Heart left ventricle (tissue), 16 donors: ENCODE measurements at regions of chr11 and their contacts with region 1.

Region 1: GRCh38 chr11:9613118-9613829 is 39.8 kb downstream of the WEE1 start:
- DNase-seq: peak; percentile 94 to 96 (median 95)
- ATAC-seq: peak; percentile 92 to 94 (median 94)
- H3K4me3 ChIP-seq: peak overlapping the region; percentile 16 to 69 (median 54)
- H3K27ac ChIP-seq: peak overlapping the region; percentile 95 to 100 (median 97)
- H3K4me1 ChIP-seq: peaks cover 0 to 28% (median 17%) of the 10 kb centered on the region in 12 donors
- H3K27me3 ChIP-seq: no peaks in the 10 kb centered on the region
- CTCF ChIP-seq: peak in 11 of 12 donors; percentile 91 to 99 (median 97)
- POLR2A ChIP-seq: peak in 1 of 2 donors; percentile 40

Region 2: DNA sequence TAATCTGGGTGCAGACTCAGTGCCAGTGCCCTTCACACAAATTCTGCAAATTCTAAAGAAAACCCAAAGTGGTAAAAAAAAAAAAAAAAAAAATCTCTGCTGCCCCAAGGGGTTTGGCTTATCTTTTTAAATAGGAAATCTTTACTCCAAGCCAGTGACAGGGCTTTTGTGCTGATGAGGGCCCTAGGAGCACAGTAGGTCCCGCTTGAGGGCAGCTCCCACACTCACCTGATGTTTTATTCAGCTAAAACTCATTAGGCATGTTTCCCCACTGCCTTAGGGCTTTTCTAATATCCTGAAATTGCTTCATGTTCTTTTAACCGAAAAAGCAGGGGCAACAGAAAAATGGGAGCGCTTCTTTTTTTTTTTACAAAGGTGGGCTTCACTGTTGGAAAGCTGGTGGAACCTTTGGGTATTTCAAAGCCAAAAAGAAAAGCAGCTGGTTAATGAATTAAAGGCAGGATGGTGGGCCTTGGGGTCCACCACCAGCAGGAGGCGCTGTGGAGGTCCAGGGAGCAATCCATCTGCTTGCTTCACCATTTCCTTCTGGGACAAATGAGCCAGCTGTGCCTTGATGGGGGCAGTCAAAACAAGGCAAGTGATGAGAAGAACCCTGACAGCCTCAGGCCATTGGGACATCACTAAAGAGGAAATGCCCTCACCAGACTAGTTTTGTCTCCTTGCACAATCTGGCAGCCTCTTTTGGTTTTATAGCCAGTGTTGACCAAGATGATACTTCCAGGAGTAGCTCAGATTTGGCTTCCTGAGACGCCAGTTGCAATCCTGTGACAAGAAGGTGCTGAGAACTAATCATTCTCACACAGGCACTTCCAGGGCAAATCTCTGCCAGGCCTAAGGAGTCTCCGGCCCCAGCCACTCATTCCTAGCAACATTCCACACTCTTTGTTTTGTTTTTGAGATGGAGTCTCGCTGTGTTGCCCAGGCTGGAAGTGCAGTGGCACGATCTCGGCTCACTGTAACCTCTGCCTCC is 78.2 kb before region 1 on chr11:
- intact Hi-C with region 1: loop called in 7 of 10 experiments (anchors 1 to 10 kb)
- DNase-seq: peak; percentile 62 to 88 (median 75)
- ATAC-seq: peak; percentile 49 to 87 (median 80)
- H3K4me3 ChIP-seq: no peak overlapping the region
- H3K27ac ChIP-seq: no peak overlapping the region
- H3K4me1 ChIP-seq: peaks cover 0 to 12% (median 2%) of the 10 kb centered on the region in 12 donors
- H3K27me3 ChIP-seq: no peaks in the 10 kb centered on the region
- CTCF ChIP-seq: peak; percentile 59 to 88 (median 74)
- POLR2A ChIP-seq: no peak

Region 3: DNA sequence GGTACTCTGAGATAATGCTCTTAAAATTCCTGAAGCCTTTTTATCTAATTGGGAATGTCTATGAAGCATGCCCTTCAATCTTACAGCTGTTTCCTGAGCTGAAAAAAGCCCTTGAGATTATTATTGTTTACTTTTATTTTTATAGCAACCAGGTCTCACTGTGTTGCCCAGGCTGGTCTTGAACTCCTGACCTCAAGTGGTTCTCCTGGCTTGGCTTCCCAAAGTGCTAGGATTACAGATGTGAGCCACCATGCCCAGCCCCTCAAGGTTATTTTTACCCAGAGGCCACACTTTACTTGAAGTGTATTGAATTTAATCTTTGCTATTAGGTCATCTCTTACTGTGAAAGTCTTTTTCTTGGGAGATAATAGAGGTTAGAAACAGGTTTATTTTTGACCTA is 43.6 kb after region 1 on chr11:
- intact Hi-C with region 1: loop called in 5 of 10 experiments (anchors 2 to 10 kb)
- DNase-seq: no peak
- ATAC-seq: no peak
- H3K4me3 ChIP-seq: no peak overlapping the region
- H3K27ac ChIP-seq: no peak overlapping the region
- H3K4me1 ChIP-seq: peaks cover 0 to 25% (median 0%) of the 10 kb centered on the region in 12 donors
- H3K27me3 ChIP-seq: no peaks in the 10 kb centered on the region
- CTCF ChIP-seq: no peak
- POLR2A ChIP-seq: no peak

Region 4: DNA sequence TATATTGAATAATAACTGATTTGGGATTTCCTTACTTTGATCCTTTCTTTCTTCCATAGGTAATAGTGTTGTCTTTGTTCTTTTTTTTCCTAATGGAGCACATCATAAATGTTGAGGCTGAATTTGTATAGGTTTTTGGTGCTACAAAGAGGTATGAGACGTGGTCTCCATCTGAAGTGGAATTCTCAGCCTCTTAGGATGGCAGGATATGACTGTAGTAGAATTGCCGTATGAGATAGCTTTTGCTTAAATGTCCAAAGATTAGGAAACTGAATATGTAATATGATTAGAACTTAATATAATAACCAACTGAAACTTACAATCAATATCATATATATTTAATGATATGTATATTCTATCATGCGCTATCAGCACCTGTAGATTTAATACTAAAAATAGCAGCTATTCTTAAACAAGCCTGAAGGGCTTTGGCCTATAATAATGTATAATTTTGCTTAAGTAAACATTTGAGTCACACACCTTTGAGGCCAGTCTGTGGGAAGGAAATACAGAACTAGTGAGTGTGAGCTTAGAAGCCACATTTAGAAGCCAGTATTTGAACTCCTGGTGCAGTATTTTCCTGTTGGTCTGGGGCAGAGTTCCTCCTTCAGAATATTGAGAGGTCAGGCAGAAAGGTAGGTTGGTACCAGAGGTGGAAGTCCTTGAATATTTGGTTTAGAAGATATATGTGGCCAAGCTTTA is 113.2 kb after region 1 on chr11:
- intact Hi-C with region 1: loop called in 1 of 10 experiments (anchors 5 kb)
- DNase-seq: no peak
- ATAC-seq: no peak
- H3K4me3 ChIP-seq: no peak overlapping the region
- H3K27ac ChIP-seq: no peak overlapping the region
- H3K4me1 ChIP-seq: peaks cover 0 to 4% (median 0%) of the 10 kb centered on the region in 12 donors
- H3K27me3 ChIP-seq: no peaks in the 10 kb centered on the region
- CTCF ChIP-seq: no peak
- POLR2A ChIP-seq: no peak

Region 5: GRCh38 chr11:9972989-9973388 is 359.7 kb after region 1 on chr11:
- intact Hi-C with region 1: loop called in 1 of 10 experiments (anchors 10 kb)
- DNase-seq: no peak
- ATAC-seq: peak; percentile 55 to 83 (median 68)
- H3K4me3 ChIP-seq: no peak overlapping the region
- H3K27ac ChIP-seq: no peak overlapping the region
- H3K4me1 ChIP-seq: peaks cover 0 to 21% (median 9%) of the 10 kb centered on the region in 12 donors
- H3K27me3 ChIP-seq: no peaks in the 10 kb centered on the region
- CTCF ChIP-seq: peak; percentile 50 to 83 (median 70)
- POLR2A ChIP-seq: no peak